GM13977 (cell line): ENCODE measurements at regions of chr5 and their contacts with region 1.

Region 1: GRCh38 chr5:32613050-32613672 is 27.8 kb downstream of the SUB1 start:
- DNase-seq: peak; percentile 80
- CTCF ChIP-seq: peak; percentile 89

Region 2: GRCh38 chr5:32232441-32233219 is 380.5 kb before region 1 on chr5:
- in situ Hi-C with region 1: loop called (anchors 25 kb)
- DNase-seq: peak; percentile 75
- CTCF ChIP-seq: peak; percentile 84

Region 3: DNA sequence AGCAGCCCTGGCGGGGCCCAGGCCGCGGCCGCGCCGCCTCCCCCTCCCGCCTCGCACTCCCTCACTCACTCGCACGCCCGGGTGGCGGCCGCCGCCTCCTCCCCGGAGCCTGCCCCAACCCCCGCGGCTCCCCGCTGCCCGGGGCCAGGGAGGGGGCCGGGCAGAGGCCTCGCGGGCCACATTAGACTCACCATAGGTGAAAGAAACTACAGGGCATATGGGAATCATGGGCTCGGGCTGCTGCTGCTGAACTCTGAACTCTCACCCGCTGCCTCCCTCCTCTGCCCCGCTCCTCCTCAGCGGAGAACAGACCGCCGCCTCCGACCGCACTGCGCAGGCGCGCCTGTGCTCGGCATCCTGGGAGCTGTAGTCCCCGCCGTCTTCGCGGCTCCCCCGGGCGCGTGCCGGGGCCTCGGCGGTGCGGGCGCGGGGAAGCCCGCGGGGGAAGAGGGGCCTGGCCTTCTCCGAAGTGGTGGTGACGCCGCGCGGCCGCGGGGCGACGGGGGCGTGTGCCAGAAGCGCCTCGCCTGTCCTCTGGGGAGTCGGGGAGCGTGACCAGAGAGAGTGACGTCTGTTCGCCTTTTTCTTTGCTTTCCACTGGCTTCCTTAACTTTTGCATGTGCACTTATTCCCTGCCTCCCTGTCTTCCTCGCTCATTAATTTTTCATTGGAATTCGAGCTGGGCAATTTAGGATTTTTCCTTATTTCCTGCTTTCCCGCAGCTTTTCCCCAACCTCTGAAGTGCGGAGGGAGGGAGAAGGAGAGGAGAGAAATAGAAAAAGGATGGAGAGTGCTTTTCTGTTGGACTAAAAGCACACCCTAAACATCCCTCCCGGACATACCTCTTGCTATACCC is 168.5 kb before region 1 on chr5 and contains the start of gene ZFR:
- in situ Hi-C with region 1: no loop called
- DNase-seq: peak; percentile 96
- CTCF ChIP-seq: no peak

Region 4: GRCh38 chr5:32489791-32490582 is 123.2 kb before region 1 on chr5:
- in situ Hi-C with region 1: loop called (anchors 10 kb)
- DNase-seq: peak; percentile 62
- CTCF ChIP-seq: peak; percentile 71

Region 5: GRCh38 chr5:33621514-33621913 is 1008.4 kb after region 1 on chr5:
- in situ Hi-C with region 1: no loop called
- DNase-seq: no peak
- CTCF ChIP-seq: no peak